ENCODE measurements at regions of chr2 and their contacts with region 1.

Region 1: GRCh38 chr2:55862673-55863390 is 60.8 kb downstream of the EFEMP1 start:
- DNase-seq: peak; percentile 98
- H3K4me3 Mint-ChIP-seq: peak overlapping the region; percentile 47
- H3K27ac Mint-ChIP-seq: peak overlapping the region; percentile 93
- H3K4me1 Mint-ChIP-seq: peaks cover 26% of the 10 kb centered on the region
- H3K27me3 Mint-ChIP-seq: no peaks in the 10 kb centered on the region
- CTCF ChIP-seq: no peak

Region 2: GRCh38 chr2:55282110-55282917 is 580.5 kb before region 1 on chr2:
- CTCF ChIA-PET with region 1: no interaction called
- POLR2A ChIA-PET with region 1: no interaction called
- intact Hi-C with region 1: no loop called
- DNase-seq: no peak
- H3K4me3 Mint-ChIP-seq: peak overlapping the region; percentile 53
- H3K27ac Mint-ChIP-seq: peak overlapping the region; percentile 61
- H3K4me1 Mint-ChIP-seq: no peaks in the 10 kb centered on the region
- H3K27me3 Mint-ChIP-seq: no peaks in the 10 kb centered on the region
- CTCF ChIP-seq: no peak

Region 3: DNA sequence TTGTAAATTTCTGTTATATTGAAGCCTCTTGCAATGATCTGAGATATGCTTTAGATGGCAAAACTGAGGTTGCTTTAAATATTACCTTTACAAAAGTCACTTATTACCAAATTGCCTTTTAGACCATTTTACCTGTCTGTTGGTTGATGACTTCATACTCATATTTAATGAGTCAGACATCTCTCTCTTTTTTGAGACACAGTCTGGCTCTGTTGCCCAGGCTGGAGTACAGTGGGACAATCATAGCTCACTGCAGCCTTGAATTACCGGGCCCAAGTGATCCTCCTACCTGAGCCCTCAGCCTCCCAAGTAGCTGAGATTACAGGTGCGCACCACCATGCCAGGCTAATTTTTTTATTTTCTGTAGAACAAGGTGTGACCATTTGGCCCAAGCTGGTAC is 233.9 kb before region 1 on chr2:
- CTCF ChIA-PET with region 1: no interaction called
- POLR2A ChIA-PET with region 1: no interaction called
- intact Hi-C with region 1: no loop called
- DNase-seq: no peak
- H3K4me3 Mint-ChIP-seq: no peak overlapping the region
- H3K27ac Mint-ChIP-seq: no peak overlapping the region
- H3K4me1 Mint-ChIP-seq: peaks cover 6% of the 10 kb centered on the region
- H3K27me3 Mint-ChIP-seq: no peaks in the 10 kb centered on the region
- CTCF ChIP-seq: no peak

Region 4: GRCh38 chr2:55809875-55810621 is 52.8 kb before region 1 on chr2:
- CTCF ChIA-PET with region 1: no interaction called
- POLR2A ChIA-PET with region 1: interaction called, 15 read pairs
- intact Hi-C with region 1: loop called (anchors 2 kb)
- DNase-seq: peak; percentile 91
- H3K4me3 Mint-ChIP-seq: peak overlapping the region; percentile 47
- H3K27ac Mint-ChIP-seq: peak overlapping the region; percentile 94
- H3K4me1 Mint-ChIP-seq: peaks cover 28% of the 10 kb centered on the region
- H3K27me3 Mint-ChIP-seq: no peaks in the 10 kb centered on the region
- CTCF ChIP-seq: no peak

Region 5: DNA sequence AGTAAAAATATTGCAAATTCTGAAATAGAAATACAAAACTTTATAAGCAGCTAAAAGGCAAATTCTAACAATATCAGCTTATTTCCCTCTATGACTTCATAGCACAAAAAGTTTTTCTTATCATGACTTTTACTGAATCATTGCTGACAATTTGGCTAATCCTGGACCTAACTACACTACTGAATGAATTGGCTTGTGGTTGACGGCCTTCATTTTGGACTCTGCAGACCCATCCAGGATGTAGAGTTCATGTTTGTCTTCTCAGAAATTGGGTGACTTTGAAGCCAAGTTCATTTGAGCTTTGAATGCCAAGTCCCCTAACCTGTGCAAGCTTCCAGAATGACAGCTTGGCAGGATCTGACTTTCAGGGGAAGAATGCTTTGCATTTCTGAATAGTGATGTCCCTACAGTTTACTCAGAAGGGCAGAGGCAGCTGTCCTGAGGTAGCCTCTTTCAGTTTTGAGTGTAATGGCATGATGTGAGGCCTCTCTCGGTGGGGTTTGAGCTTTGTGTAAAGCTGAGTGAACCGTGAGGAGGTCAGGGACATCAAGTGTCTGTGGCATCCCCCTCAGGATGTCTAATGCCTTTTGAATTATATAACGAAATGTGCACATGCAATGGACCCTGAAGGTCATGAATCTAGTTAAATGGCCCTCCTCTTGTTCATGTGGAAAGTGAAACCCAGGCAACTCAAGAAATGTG is 12.8 kb after region 1 on chr2:
- CTCF ChIA-PET with region 1: interaction called, 4 read pairs
- POLR2A ChIA-PET with region 1: interaction called, 10 read pairs
- intact Hi-C with region 1: no loop called
- DNase-seq: no peak
- H3K4me3 Mint-ChIP-seq: no peak overlapping the region
- H3K27ac Mint-ChIP-seq: no peak overlapping the region
- H3K4me1 Mint-ChIP-seq: peaks cover 9% of the 10 kb centered on the region
- H3K27me3 Mint-ChIP-seq: no peaks in the 10 kb centered on the region
- CTCF ChIP-seq: no peak

Region 6: DNA sequence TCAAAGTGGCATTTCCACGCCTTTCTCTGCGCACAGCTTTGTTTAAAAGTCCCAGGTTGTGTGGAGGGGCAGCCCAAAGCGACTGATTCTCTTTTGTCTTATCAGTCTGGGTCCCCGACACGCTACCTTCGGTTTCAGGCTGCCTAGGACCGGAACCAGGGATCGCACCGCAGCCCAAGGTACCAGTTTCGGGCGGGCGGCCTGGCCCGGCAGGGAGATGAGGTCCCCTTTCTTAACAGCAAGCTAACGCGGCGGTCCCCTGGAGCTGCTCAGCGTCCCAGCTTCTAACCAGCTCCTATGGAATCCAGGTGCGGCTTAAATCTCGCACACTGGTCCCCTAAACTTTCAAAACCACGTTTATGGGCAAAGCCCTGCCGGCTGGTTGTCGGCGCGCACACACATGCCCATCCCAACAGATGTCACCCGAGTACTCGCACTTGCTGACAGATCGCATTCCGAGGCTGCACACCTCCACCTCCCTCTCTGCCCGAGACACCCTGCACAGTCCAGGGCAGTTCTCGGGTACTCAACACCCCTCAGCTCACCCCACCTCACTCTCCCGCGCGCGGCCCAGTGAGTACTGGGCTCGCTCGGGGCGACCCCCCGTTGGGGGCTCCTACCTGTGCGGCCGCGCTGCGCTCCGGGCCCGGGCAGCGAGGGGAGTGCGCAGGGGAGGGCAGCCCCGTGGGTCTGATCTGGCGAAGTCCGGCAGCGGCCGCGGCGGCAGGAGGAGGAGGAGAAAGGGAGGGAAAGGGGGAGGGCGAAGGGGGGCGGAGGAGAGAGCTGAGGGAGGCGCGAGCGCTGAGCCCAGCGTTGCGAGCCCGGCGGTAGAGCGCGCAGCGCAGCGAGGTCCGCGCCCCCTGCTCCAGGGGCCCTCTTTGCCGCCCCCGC is 60.5 kb after region 1 on chr2 and contains the start of gene EFEMP1:
- CTCF ChIA-PET with region 1: interaction called, 9 read pairs
- POLR2A ChIA-PET with region 1: interaction called, 11 read pairs
- intact Hi-C with region 1: loop called (anchors 1 kb)
- DNase-seq: peak; percentile 83
- H3K4me3 Mint-ChIP-seq: peak within 1 kb of the TSS; percentile 87
- H3K27ac Mint-ChIP-seq: peak within 1 kb of the TSS; percentile 87
- H3K4me1 Mint-ChIP-seq: peaks cover 10% of the 10 kb centered on the region
- H3K27me3 Mint-ChIP-seq: no peaks in the 10 kb centered on the region
- CTCF ChIP-seq: no peak
- total RNA-seq, gene EFEMP1: 125 and 163 TPM in 2 replicates